ENCODE measurements at regions of chr1 and their contacts with region 1.

Region 1: GRCh38 chr1:183480971-183481441 is 8.7 kb downstream of the SMG7 start:
- DNase-seq: peak; percentile 51
- H3K4me3 ChIP-seq: no peak overlapping the region
- H3K27ac ChIP-seq: no peak overlapping the region
- H3K4me1 ChIP-seq: peaks cover 19% of the 10 kb centered on the region
- H3K27me3 ChIP-seq: no peaks in the 10 kb centered on the region
- CTCF ChIP-seq: no peak
- POLR2A ChIP-seq: no peak

Region 2: GRCh38 chr1:183497219-183497618 is 16.2 kb after region 1 on chr1:
- CTCF ChIA-PET with region 1: interaction called, 3 read pairs
- POLR2A ChIA-PET with region 1: no interaction called
- dilution Hi-C with region 1: no loop called
- intact Hi-C with region 1: loop called (anchors 2 kb)
- DNase-seq: no peak
- H3K4me3 ChIP-seq: no peak overlapping the region
- H3K27ac ChIP-seq: no peak overlapping the region
- H3K4me1 ChIP-seq: peaks cover 2% of the 10 kb centered on the region
- H3K27me3 ChIP-seq: no peaks in the 10 kb centered on the region
- CTCF ChIP-seq: no peak
- POLR2A ChIP-seq: no peak

Measured in endothelial cell of umbilical vein (primary cell).